Heart right ventricle (tissue), 16 donors: ENCODE measurements at regions of chr14 and their contacts with region 1.

Region 1: GRCh38 chr14:67943947-67944346 is 124.4 kb downstream of the RAD51B start:
- DNase-seq: peak in 1 of 2 donors; percentile 86
- ATAC-seq: peak in 7 of 8 donors; percentile 53 to 73 (median 66)
- H3K4me3 ChIP-seq: no peak overlapping the region
- H3K27ac ChIP-seq: peak overlapping the region in 3 of 10 donors; percentile 35 to 76 (median 59)
- H3K4me1 ChIP-seq: peaks cover 0 to 56% (median 19%) of the 10 kb centered on the region in 9 donors
- H3K27me3 ChIP-seq: no peaks in the 10 kb centered on the region
- CTCF ChIP-seq: peak; percentile 59 to 85 (median 74)

Region 2: GRCh38 chr14:68140111-68140741 is 196.3 kb after region 1 on chr14:
- intact Hi-C with region 1: loop called in 3 of 10 experiments (anchors 5 kb)
- DNase-seq: peak in 1 of 2 donors; percentile 72
- ATAC-seq: peak; percentile 25 to 77 (median 60)
- H3K4me3 ChIP-seq: no peak overlapping the region
- H3K27ac ChIP-seq: peak overlapping the region; percentile 6 to 78 (median 52)
- H3K4me1 ChIP-seq: peaks cover 15 to 74% (median 45%) of the 10 kb centered on the region in 9 donors
- H3K27me3 ChIP-seq: no peaks in the 10 kb centered on the region
- CTCF ChIP-seq: no peak

Region 3: GRCh38 chr14:68377459-68377858 is 433.5 kb after region 1 on chr14:
- intact Hi-C with region 1: loop called in 1 of 10 experiments (anchors 10 kb)
- DNase-seq: peak; percentile 54 to 77
- ATAC-seq: peak; percentile 84 to 95 (median 90)
- H3K4me3 ChIP-seq: peak overlapping the region in 1 of 10 donors; percentile 2
- H3K27ac ChIP-seq: peak overlapping the region; percentile 54 to 89 (median 80)
- H3K4me1 ChIP-seq: peaks cover 4 to 76% (median 38%) of the 10 kb centered on the region in 9 donors
- H3K27me3 ChIP-seq: no peaks in the 10 kb centered on the region
- CTCF ChIP-seq: no peak

Region 4: GRCh38 chr14:68816262-68816942 is 872.5 kb after region 1 on chr14:
- intact Hi-C with region 1: loop called in 9 of 10 experiments (anchors 1 to 10 kb)
- DNase-seq: peak; percentile 89 to 92
- ATAC-seq: peak; percentile 90 to 96 (median 92)
- H3K4me3 ChIP-seq: peak overlapping the region; percentile 22 to 68 (median 57)
- H3K27ac ChIP-seq: peak overlapping the region; percentile 98 to 100 (median 99)
- H3K4me1 ChIP-seq: peaks cover 6 to 64% (median 42%) of the 10 kb centered on the region in 9 donors
- H3K27me3 ChIP-seq: no peaks in the 10 kb centered on the region
- CTCF ChIP-seq: peak; percentile 95 to 99 (median 98)

Region 5: DNA sequence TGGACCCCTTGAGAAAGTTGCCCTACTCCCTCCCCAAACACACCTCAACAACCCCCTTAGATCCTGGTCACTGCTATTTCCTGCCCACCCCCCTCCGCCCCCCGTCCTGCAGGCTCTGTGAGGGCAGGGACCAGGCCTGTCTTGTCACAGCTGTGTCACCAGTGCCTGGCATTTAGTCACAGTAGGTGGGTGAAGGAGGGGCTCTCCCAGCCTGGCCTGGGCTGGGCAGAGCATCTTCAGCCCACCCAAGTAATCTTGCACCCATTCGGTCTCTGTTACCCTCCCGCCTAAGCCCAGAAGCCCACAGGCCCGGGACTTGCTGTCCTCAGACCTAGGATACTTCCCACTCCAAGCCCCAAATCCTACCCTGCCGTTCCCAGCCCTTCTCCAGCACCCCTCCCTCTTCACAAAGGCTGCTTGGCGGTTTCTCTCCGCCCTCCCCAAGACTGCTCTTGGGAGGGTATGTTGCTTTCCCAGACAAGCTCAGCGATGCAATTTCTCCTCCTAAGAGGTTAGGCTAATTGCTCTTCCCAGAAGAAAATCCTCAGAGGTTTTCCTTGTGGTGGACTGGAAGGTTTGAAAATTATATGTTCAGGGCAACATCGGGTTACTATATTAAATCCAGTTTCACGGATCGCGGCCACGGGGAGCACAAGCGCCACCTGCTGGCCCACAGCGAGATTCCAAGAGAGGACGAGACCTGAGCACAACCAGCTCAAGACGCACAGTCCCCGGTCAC is 899.7 kb after region 1 on chr14:
- intact Hi-C with region 1: loop called in 1 of 10 experiments (anchors 5 kb)
- DNase-seq: peak; percentile 76 to 84
- ATAC-seq: peak; percentile 79 to 91 (median 87)
- H3K4me3 ChIP-seq: peak overlapping the region in 9 of 10 donors; percentile 5 to 50 (median 38)
- H3K27ac ChIP-seq: peak overlapping the region in 2 of 10 donors; percentile 28 to 67
- H3K4me1 ChIP-seq: peaks cover 0 to 24% (median 3%) of the 10 kb centered on the region in 9 donors
- H3K27me3 ChIP-seq: no peaks in the 10 kb centered on the region
- CTCF ChIP-seq: peak; percentile 84 to 97 (median 94)